Dendritic cell treated with granulocyte-macrophage colony-stimulating factor and Interleukin-4, amounts not matched to agents 40 ng/mL and 50 ng/mL, for 4 days (primary cell): ENCODE measurements at regions of chr4 and their contacts with region 1.

Region 1: GRCh38 chr4:185134307-185134869 is 8.7 kb upstream of the SLC25A4 start:
- H3K4me3 Mint-ChIP-seq: no peak overlapping the region
- H3K27ac Mint-ChIP-seq: no peak overlapping the region
- H3K4me1 Mint-ChIP-seq: no peaks in the 10 kb centered on the region
- H3K27me3 Mint-ChIP-seq: peaks cover 48% of the 10 kb centered on the region

Region 2: DNA sequence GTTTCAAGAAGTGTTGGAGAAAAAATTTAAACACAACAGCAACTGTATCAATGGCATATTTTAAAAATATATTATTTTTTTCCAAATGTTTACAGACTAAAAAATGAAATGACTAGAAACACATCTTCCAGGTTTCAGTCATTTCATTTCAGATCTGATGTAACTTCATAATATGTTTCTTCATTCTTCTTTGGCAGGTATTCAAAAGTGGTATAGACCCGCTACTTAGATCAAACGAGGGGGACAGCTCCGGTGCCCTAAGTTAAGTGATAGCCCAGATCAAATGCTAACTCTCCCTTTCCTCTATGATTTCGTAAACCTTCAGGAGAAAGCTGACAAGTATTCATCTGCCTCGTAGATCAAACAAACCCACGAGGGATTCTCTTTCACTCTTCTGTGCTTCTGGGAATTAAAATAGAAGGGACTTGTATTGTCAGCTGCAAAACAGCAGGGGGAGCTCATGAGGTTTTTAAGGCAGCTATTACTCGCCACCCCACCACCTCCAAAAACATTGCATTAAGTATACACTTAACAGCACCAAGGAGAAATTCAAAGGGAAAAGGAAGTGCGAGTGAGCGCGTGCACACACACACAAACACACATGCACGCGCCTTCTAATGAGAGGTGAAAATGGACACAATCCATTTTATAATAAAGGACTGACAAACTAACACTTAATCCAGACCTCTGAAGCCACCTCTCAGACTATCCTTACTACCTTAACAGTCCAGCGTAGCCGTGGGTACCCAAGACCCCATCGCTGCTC is 94.7 kb before region 1 on chr4:
- intact Hi-C with region 1: loop called (anchors 2 kb)
- H3K4me3 Mint-ChIP-seq: no peak overlapping the region
- H3K27ac Mint-ChIP-seq: no peak overlapping the region
- H3K4me1 Mint-ChIP-seq: peaks cover 8% of the 10 kb centered on the region
- H3K27me3 Mint-ChIP-seq: peaks cover 12% of the 10 kb centered on the region